Naive thymus-derived CD4-positive, alpha-beta T cell (primary cell): ENCODE measurements at regions of chr21 and their contacts with region 1.

Region 1: GRCh38 chr21:34907461-34908418 is 141.4 kb downstream of the RUNX1 start:
- DNase-seq: no peak
- ATAC-seq: no peak
- H3K4me3 ChIP-seq: no peak overlapping the region
- H3K4me3 Mint-ChIP-seq: peak overlapping the region in 5 of 10 donors; percentile 17 to 48 (median 26)
- H3K27ac ChIP-seq: no peak overlapping the region
- H3K27ac Mint-ChIP-seq: peak overlapping the region in 8 of 9 donors; percentile 24 to 89 (median 62)
- H3K4me1 ChIP-seq: peaks cover 9 to 38% of the 10 kb centered on the region in 2 donors
- H3K4me1 Mint-ChIP-seq: peaks cover 35 to 89% (median 80%) of the 10 kb centered on the region in 7 donors
- H3K27me3 ChIP-seq: no peaks in the 10 kb centered on the region
- H3K27me3 Mint-ChIP-seq: peaks cover 0 to 8% (median 0%) of the 10 kb centered on the region in 5 donors

Region 2: DNA sequence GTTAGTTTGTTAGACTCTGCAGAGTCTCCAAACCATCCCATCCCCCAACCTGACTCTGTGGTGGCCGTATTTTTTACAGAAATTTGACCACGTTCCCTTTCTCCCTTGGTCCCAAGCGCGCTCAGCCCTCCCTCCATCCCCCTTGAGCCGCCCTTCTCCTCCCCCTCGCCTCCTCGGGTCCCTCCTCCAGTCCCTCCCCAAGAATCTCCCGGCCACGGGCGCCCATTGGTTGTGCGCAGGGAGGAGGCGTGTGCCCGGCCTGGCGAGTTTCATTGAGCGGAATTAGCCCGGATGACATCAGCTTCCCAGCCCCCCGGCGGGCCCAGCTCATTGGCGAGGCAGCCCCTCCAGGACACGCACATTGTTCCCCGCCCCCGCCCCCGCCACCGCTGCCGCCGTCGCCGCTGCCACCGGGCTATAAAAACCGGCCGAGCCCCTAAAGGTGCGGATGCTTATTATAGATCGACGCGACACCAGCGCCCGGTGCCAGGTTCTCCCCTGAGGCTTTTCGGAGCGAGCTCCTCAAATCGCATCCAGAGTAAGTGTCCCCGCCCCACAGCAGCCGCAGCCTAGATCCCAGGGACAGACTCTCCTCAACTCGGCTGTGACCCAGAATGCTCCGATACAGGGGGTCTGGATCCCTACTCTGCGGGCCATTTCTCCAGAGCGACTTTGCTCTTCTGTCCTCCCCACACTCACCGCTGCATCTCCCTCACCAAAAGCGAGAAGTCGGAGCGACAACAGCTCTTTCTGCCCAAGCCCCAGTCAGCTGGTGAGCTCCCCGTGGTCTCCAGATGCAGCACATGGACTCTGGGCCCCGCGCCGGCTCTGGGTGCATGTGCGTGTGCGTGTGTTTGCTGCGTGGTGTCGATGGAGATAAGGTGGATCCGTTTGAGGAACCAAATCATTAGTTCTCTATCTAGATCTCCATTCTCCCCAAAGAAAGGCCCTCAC is 1882.0 kb before region 1 on chr21 and contains the start of gene OLIG2:
- CTCF ChIA-PET with region 1: no interaction called
- POLR2A ChIA-PET with region 1: no interaction called
- intact Hi-C with region 1: no loop called
- DNase-seq: no peak
- ATAC-seq: no peak
- H3K4me3 ChIP-seq: no peak within 1 kb of the TSS
- H3K4me3 Mint-ChIP-seq: peak within 1 kb of the TSS; percentile 35 to 76 (median 61)
- H3K27ac ChIP-seq: no peak within 1 kb of the TSS
- H3K27ac Mint-ChIP-seq: peak within 1 kb of the TSS in 2 of 9 donors; percentile 28 to 84
- H3K4me1 ChIP-seq: peaks cover 12 to 48% of the 10 kb centered on the region in 2 donors
- H3K4me1 Mint-ChIP-seq: peaks cover 24 to 70% (median 54%) of the 10 kb centered on the region in 7 donors
- H3K27me3 ChIP-seq: peaks cover 24 to 50% of the 10 kb centered on the region in 2 donors
- H3K27me3 Mint-ChIP-seq: peaks cover 67 to 85% (median 80%) of the 10 kb centered on the region in 5 donors
- total RNA-seq, gene OLIG2: not detected

Region 3: GRCh38 chr21:34129039-34129891 is 778.5 kb before region 1 on chr21:
- CTCF ChIA-PET with region 1: no interaction called
- POLR2A ChIA-PET with region 1: no interaction called
- intact Hi-C with region 1: no loop called
- DNase-seq: peak; percentile 9 to 86 (median 78)
- ATAC-seq: peak; percentile 92
- H3K4me3 ChIP-seq: peak overlapping the region; percentile 22
- H3K4me3 Mint-ChIP-seq: peak overlapping the region; percentile 64 to 82 (median 76)
- H3K27ac ChIP-seq: peak overlapping the region; percentile 64
- H3K27ac Mint-ChIP-seq: peak overlapping the region; percentile 72 to 97 (median 90)
- H3K4me1 ChIP-seq: peaks cover 4 to 67% of the 10 kb centered on the region in 2 donors
- H3K4me1 Mint-ChIP-seq: peaks cover 69 to 99% (median 95%) of the 10 kb centered on the region in 7 donors
- H3K27me3 ChIP-seq: no peaks in the 10 kb centered on the region
- H3K27me3 Mint-ChIP-seq: no peaks in the 10 kb centered on the region

Region 4: GRCh38 chr21:34919406-34919805 is 11.7 kb after region 1 on chr21:
- CTCF ChIA-PET with region 1: no interaction called
- POLR2A ChIA-PET with region 1: no interaction called
- intact Hi-C with region 1: loop called in 1 of 2 experiments (anchors 2 kb)
- DNase-seq: no peak
- ATAC-seq: no peak
- H3K4me3 ChIP-seq: no peak overlapping the region
- H3K4me3 Mint-ChIP-seq: no peak overlapping the region
- H3K27ac ChIP-seq: no peak overlapping the region
- H3K27ac Mint-ChIP-seq: peak overlapping the region in 2 of 9 donors; percentile 44 to 59
- H3K4me1 ChIP-seq: peaks cover 0 to 20% of the 10 kb centered on the region in 2 donors
- H3K4me1 Mint-ChIP-seq: peaks cover 18 to 92% (median 83%) of the 10 kb centered on the region in 7 donors
- H3K27me3 ChIP-seq: no peaks in the 10 kb centered on the region
- H3K27me3 Mint-ChIP-seq: no peaks in the 10 kb centered on the region